ENCODE measurements at regions of chr4 and their contacts with region 1.

Region 1: DNA sequence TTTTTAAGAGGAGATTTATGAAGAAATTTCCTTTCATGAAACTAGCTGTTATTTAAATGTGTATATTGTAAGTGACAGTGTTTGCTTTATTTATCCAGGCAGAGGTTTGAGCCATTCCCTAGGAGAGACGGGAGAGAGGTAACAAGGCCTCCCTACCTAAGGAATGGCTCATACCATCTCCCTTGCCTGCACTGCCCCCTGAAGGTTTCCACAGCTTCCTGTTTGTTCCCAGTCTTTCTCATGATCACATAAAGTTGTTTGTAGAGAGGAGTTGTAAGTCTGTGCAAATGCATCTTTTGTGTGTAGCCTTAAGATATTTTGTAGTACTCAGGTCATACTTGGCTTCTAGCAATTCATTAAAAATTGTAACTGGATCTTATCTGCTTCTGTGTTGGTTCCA is 1504.5 kb upstream of the PCDH10 start:
- DNase-seq: peak; percentile 45
- H3K4me3 ChIP-seq: no peak overlapping the region
- H3K27ac ChIP-seq: no peak overlapping the region
- H3K4me1 ChIP-seq: no peaks in the 10 kb centered on the region
- H3K27me3 ChIP-seq: no peaks in the 10 kb centered on the region
- CTCF ChIP-seq: peak; percentile 78 to 90

Region 2: GRCh38 chr4:131091896-131092295 is 552.7 kb before region 1 on chr4:
- CTCF ChIA-PET with region 1: no interaction called
- dilution Hi-C with region 1: no loop called
- in situ Hi-C with region 1: loop called in 1 of 2 experiments (anchors 25 kb)
- intact Hi-C with region 1: loop called (anchors 1 kb)
- DNase-seq: peak; percentile 21
- H3K4me3 ChIP-seq: no peak overlapping the region
- H3K27ac ChIP-seq: no peak overlapping the region
- H3K4me1 ChIP-seq: no peaks in the 10 kb centered on the region
- H3K27me3 ChIP-seq: no peaks in the 10 kb centered on the region
- CTCF ChIP-seq: peak; percentile 38 to 61

Region 3: DNA sequence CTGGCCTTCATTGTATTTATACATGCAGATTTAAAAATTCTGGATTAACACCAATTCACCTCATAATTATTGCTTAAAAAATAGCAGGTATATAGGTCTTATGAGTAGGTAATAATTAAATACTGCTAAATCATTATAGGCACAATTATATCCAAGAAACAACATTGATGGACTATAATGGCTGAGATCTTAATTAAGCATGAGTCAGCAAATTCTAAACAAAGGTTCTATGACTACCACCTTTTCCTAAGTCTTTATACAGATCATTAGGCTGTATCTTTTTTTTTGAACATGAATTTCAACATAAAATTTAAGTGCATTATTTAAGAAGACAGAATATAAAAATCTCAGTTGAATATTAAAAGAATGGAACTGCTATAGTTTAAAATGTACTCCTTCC is 174.3 kb before region 1 on chr4:
- CTCF ChIA-PET with region 1: interaction called, 14 read pairs
- dilution Hi-C with region 1: no loop called
- in situ Hi-C with region 1: no loop called
- intact Hi-C with region 1: loop called (anchors 1 kb)
- DNase-seq: no peak
- H3K4me3 ChIP-seq: no peak overlapping the region
- H3K27ac ChIP-seq: no peak overlapping the region
- H3K4me1 ChIP-seq: no peaks in the 10 kb centered on the region
- H3K27me3 ChIP-seq: no peaks in the 10 kb centered on the region
- CTCF ChIP-seq: no peak

Region 4: DNA sequence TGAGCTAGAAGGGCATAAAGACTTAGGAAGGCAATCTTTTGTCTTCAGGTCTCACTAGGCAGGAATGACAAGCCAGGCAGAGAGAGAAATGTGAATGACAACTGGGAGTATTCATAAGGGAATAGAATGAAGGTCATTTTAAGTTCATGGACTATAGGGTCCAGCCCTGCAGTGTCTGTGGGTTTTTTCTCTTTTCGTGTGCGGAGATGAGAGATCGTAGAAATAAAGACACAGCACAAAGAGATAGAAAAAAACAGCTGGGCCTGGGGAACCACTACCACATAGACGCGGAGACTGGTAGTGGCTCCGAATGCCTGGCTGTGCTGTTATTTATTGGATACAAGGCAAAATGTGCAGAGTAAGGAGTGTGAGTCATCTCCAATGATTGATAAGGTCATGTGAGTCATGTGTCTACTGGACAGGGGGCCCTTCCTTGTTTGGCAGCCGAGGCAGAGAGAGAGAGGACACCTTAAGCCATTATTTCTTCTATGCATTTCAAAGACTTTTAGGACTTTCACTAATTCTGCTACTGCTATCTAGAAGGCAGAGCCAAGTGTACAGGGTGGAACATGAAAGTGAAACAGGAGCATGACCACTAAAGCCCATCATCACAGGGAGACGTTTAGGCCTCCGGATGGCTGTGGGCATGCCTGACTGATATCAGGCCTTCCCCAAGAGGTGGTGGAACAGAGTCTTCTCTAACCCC is 582.7 kb after region 1 on chr4:
- CTCF ChIA-PET with region 1: no interaction called
- dilution Hi-C with region 1: no loop called
- in situ Hi-C with region 1: no loop called
- intact Hi-C with region 1: loop called (anchors 5 kb)
- DNase-seq: no peak
- H3K4me3 ChIP-seq: no peak overlapping the region
- H3K27ac ChIP-seq: no peak overlapping the region
- H3K4me1 ChIP-seq: no peaks in the 10 kb centered on the region
- H3K27me3 ChIP-seq: no peaks in the 10 kb centered on the region
- CTCF ChIP-seq: no peak

Measured in mammary epithelial cell (primary cell).